ENCODE measurements at regions of chr1 and their contacts with region 1.

Region 1: DNA sequence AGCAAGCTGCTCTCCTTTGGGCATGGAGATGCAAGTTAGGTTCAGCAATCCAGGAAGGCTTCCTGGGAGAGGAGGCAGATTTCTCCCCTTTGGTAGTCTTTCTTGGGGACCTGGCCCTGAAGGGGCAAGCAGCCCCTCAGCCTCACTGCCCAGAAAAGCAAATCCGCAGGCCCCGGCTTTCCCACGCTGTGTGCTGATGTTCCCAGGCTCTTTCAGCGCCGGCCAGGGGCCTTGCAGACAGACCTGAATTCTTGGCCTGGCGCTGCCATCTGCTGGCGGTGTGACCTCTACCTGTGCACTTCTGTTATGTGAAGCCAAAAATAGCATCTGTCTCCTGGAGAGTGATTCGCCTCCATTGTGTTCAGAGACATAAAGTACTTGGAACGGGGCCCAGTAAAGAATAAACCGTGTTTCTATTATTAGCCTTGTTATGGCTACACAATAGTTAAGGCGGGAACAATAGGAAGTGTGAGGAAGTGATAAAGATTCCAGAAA is 64.8 kb downstream of the ALPL start:
- DNase-seq: peak; percentile 99
- H3K4me3 ChIP-seq: no peak overlapping the region
- H3K27ac ChIP-seq: peak overlapping the region; percentile 87
- H3K4me1 ChIP-seq: peaks cover 17% of the 10 kb centered on the region
- H3K27me3 ChIP-seq: peaks cover 0 to 8% of the 10 kb centered on the region in 2 experiments
- CTCF ChIP-seq: peak; percentile 34 to 50
- POLR2A ChIP-seq: peak; percentile 31

Region 2: DNA sequence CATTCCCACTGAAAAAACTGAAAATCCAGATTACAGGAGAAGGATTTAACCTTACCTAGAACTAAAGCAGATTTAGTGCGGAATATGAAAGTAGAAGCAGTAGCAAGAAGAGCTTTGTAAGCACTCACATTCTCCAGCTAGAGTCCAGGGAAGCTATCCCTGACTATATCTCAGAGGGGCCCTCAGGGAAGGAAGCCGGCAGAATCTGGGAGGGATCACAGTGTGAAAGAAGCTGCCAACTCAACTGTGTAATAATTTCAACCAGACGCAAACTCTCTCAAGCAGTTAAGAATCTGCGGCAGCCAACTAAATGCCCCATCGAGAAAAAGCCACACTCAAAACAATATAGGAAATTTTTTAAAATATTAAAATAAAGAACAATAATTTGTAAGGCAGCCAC is 561.1 kb before region 1 on chr1:
- CTCF ChIA-PET with region 1: no interaction called
- POLR2A ChIA-PET with region 1: no interaction called
- dilution Hi-C with region 1: no loop called
- intact Hi-C with region 1: no loop called
- DNase-seq: no peak
- H3K4me3 ChIP-seq: no peak overlapping the region
- H3K27ac ChIP-seq: no peak overlapping the region
- H3K4me1 ChIP-seq: no peaks in the 10 kb centered on the region
- H3K27me3 ChIP-seq: no peaks in the 10 kb centered on the region
- CTCF ChIP-seq: no peak
- POLR2A ChIP-seq: no peak

Region 3: DNA sequence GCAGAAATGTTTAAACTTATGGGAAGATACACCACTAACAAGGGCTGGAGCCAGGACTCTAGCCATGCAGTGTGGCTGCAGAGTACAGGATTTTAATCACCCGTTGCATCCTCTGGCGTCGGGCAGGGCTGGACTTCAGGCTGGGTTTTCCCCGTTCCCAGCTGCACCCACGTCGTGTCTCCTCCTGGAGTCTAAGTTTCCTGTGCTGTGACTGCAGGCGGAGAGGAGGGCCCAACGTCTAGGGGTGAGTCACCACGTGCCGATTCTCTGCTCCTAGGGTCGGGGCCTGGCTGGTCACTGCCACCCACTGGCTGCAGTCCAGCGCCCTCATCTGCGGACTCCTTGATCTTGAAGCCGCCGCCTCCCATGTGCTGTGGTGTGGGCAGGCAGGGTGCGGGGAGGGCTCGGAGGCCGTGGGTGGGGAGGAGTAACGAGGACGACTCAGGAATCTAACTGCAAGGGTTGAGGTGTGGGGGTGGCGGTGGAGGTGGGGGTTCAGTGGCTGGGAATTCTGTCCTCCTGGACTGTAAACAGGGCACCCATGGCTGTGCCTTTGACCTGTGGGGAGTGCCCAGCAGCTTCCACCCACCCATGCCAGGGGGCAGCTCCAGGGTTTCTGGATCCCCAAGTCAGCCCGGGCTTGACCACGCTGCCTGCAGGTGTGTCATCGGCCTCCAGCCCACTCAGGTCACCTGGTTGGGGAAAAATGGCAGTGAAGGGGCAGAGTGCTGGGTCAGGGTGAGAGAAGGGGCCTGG is 13.0 kb after region 1 on chr1:
- CTCF ChIA-PET with region 1: interaction called, 4 read pairs
- POLR2A ChIA-PET with region 1: no interaction called
- dilution Hi-C with region 1: no loop called
- intact Hi-C with region 1: loop called (anchors 1 kb)
- DNase-seq: peak; percentile 83
- H3K4me3 ChIP-seq: no peak overlapping the region
- H3K27ac ChIP-seq: no peak overlapping the region
- H3K4me1 ChIP-seq: peaks cover 12% of the 10 kb centered on the region
- H3K27me3 ChIP-seq: peaks cover 4 to 20% of the 10 kb centered on the region in 2 experiments
- CTCF ChIP-seq: no peak
- POLR2A ChIP-seq: no peak